Activated B cell treated with CpG ODN at 0.5 μM for 24 hours (primary cell): ENCODE measurements at regions of chr7 and their contacts with region 1.

Region 1: DNA sequence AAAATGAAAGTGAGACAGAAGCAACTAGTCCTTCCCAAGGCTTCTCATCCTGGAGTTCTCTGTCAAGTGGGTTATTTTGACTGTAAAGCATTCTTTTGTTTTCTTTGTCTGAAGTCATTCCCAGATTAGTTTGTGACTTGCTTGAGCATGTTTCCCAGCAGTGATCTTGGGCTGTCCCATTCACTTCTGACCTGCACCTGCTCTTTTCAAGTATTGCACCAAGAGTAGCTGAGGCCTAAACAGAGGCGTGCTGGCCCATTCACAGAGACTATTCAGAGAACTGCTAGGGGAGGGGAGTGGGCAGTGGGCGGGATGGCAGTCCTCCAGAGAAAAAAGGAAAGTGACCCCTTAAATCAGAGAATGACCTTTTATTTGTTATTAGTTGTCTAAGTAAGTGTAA is 61.3 kb downstream of the CACNA2D1 start:
- DNase-seq: no peak
- ATAC-seq: no peak
- H3K4me3 Mint-ChIP-seq: no peak overlapping the region
- H3K27ac Mint-ChIP-seq: no peak overlapping the region
- H3K4me1 Mint-ChIP-seq: no peaks in the 10 kb centered on the region
- H3K27me3 Mint-ChIP-seq: no peaks in the 10 kb centered on the region
- CTCF ChIP-seq: no peak

Region 2: DNA sequence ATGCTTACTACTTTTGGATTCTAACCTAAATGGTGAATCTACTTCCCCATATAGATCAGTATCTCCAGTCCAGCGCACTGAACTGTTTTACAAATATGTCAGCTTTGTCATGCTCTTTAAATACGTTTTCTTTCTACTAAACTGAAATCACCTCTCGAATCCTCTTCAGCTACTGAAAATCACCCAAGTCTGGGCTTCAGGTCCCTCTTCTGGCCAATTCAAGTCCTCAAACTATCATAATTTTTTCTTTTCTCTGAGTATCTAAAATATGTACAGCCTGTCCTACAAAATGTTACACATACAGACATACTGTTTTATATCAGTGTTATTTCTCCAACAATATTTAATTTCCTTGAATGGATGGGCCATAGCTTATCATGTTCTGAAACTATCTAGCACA is 22.9 kb before region 1 on chr7:
- CTCF ChIA-PET with region 1: no interaction called
- POLR2A ChIA-PET with region 1: no interaction called
- intact Hi-C with region 1: no loop called
- DNase-seq: no peak
- ATAC-seq: no peak
- H3K4me3 Mint-ChIP-seq: no peak overlapping the region
- H3K27ac Mint-ChIP-seq: no peak overlapping the region
- H3K4me1 Mint-ChIP-seq: no peaks in the 10 kb centered on the region
- H3K27me3 Mint-ChIP-seq: no peaks in the 10 kb centered on the region
- CTCF ChIP-seq: no peak

Region 3: GRCh38 chr7:82411732-82412131 is 29.5 kb after region 1 on chr7:
- CTCF ChIA-PET with region 1: no interaction called
- POLR2A ChIA-PET with region 1: no interaction called
- intact Hi-C with region 1: loop called (anchors 1 kb)
- DNase-seq: no peak
- ATAC-seq: no peak
- H3K4me3 Mint-ChIP-seq: no peak overlapping the region
- H3K27ac Mint-ChIP-seq: no peak overlapping the region
- H3K4me1 Mint-ChIP-seq: no peaks in the 10 kb centered on the region
- H3K27me3 Mint-ChIP-seq: no peaks in the 10 kb centered on the region
- CTCF ChIP-seq: no peak

Region 4: GRCh38 chr7:82521906-82522445 is 139.7 kb after region 1 on chr7:
- CTCF ChIA-PET with region 1: no interaction called
- POLR2A ChIA-PET with region 1: no interaction called
- intact Hi-C with region 1: no loop called
- DNase-seq: no peak
- ATAC-seq: no peak
- H3K4me3 Mint-ChIP-seq: no peak overlapping the region
- H3K27ac Mint-ChIP-seq: no peak overlapping the region
- H3K4me1 Mint-ChIP-seq: no peaks in the 10 kb centered on the region
- H3K27me3 Mint-ChIP-seq: no peaks in the 10 kb centered on the region
- CTCF ChIP-seq: no peak

Region 5: DNA sequence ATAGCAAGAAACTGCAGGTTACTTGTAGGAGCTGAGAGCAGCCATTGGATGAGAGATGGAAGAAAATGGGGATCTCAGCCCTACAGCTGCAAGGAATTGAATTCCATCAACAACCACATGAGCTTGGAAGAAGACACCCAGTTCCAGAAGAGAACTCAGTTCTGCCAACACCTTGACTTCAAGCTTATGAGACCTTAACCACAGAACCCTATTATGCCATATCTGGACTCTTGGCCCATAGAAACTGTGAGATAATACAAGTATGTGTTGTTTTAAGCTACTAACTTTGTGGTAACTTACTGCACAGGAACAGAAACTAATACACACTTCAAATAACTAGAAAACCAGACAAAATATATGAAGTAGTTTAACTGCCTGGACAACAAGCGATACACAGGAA is 273.7 kb after region 1 on chr7:
- CTCF ChIA-PET with region 1: no interaction called
- POLR2A ChIA-PET with region 1: no interaction called
- intact Hi-C with region 1: no loop called
- DNase-seq: no peak
- ATAC-seq: no peak
- H3K4me3 Mint-ChIP-seq: no peak overlapping the region
- H3K27ac Mint-ChIP-seq: no peak overlapping the region
- H3K4me1 Mint-ChIP-seq: no peaks in the 10 kb centered on the region
- H3K27me3 Mint-ChIP-seq: no peaks in the 10 kb centered on the region
- CTCF ChIP-seq: no peak